Activated T-helper 2 cell treated with anti-CD3 and anti-CD28 coated beads, Interferon-gamma antibody, Interleukin-2, Interleukin-4, amounts not matched to agents 10 μg/mL and 5 μg/mL and 100 μg/mL, durations not matched to agents 14 hours and 24 hours and 36 hours (primary cell): ENCODE measurements at regions of chr1 and their contacts with region 1.

Region 1: GRCh38 chr1:246566128-246566812 is at the starts of genes CNST and TFB2M:
- DNase-seq: peak; percentile 93
- H3K4me3 Mint-ChIP-seq: peak within 1 kb of the TSS; percentile 99
- H3K27ac Mint-ChIP-seq: peak within 1 kb of the TSS; percentile 98
- H3K4me1 Mint-ChIP-seq: peaks cover 35% of the 10 kb centered on the region
- H3K27me3 Mint-ChIP-seq: no peaks in the 10 kb centered on the region
- total RNA-seq, gene CNST: 18.8 and 21.6 TPM in 2 replicates
- total RNA-seq, gene TFB2M: 21.0 and 21.7 TPM in 2 replicates

Region 2: GRCh38 chr1:244970661-244971551 is 1595.4 kb before region 1 on chr1:
- intact Hi-C with region 1: loop called (anchors 2 kb)
- DNase-seq: peak; percentile 88
- H3K4me3 Mint-ChIP-seq: peak overlapping the region; percentile 91
- H3K27ac Mint-ChIP-seq: peak overlapping the region; percentile 98
- H3K4me1 Mint-ChIP-seq: peaks cover 13% of the 10 kb centered on the region
- H3K27me3 Mint-ChIP-seq: peaks cover 4% of the 10 kb centered on the region

Region 3: GRCh38 chr1:245953876-245954660 is 612.2 kb before region 1 on chr1:
- intact Hi-C with region 1: loop called (anchors 5 kb)
- DNase-seq: no peak
- H3K4me3 Mint-ChIP-seq: peak overlapping the region; percentile 73
- H3K27ac Mint-ChIP-seq: peak overlapping the region; percentile 92
- H3K4me1 Mint-ChIP-seq: peaks cover 28% of the 10 kb centered on the region
- H3K27me3 Mint-ChIP-seq: no peaks in the 10 kb centered on the region

Region 4: DNA sequence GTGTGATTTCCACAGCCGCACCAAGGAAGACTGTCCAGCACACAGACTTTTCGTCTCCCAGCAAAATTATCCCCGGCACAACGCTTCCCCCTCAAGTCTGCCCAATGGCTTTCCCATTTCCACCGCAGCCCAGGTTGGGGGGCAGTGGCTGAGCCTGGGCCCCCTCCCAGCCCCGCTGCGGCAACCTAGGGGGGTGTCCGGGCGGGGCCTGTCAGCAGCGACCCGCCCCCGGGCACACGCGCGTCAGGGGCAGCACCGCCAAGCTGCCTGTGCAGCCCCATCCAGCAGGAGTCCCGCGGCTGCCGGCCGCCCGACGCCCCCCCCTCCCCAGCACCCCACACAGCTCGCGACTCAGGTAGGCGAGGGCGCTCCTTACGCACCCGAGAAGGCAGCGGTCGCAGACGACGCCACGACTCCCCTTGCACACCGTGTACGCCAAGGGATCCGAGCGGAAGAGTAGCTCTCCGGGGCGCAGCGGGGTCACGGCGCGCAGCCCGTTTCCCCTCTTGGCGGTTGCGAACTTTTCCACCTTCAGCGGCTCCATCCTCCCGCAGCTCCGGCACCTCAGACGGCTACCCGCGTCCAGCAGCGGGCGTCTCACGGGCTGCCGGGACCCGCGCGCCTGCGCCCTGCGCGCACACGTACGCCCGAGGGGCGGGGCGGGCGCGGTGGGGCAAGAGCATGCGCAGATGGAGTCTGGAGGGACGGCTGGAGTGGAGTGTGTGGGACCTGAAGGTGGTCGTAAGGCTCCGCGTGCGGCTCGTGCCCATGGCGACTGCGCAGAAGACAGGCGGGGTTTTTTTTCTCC is 59.4 kb before region 1 on chr1 and contains the start of gene SMYD3:
- intact Hi-C with region 1: loop called (anchors 1 kb)
- DNase-seq: peak; percentile 67
- H3K4me3 Mint-ChIP-seq: peak within 1 kb of the TSS; percentile 85
- H3K27ac Mint-ChIP-seq: peak within 1 kb of the TSS; percentile 90
- H3K4me1 Mint-ChIP-seq: peaks cover 20% of the 10 kb centered on the region
- H3K27me3 Mint-ChIP-seq: no peaks in the 10 kb centered on the region
- total RNA-seq, gene SMYD3: 24.1 and 26.2 TPM in 2 replicates

Region 5: GRCh38 chr1:246602194-246602593 is 35.9 kb after region 1 on chr1:
- intact Hi-C with region 1: loop called (anchors 5 kb)
- DNase-seq: no peak
- H3K4me3 Mint-ChIP-seq: no peak overlapping the region
- H3K27ac Mint-ChIP-seq: no peak overlapping the region
- H3K4me1 Mint-ChIP-seq: peaks cover 14% of the 10 kb centered on the region
- H3K27me3 Mint-ChIP-seq: no peaks in the 10 kb centered on the region

Region 6: GRCh38 chr1:246699095-246699735 is 132.9 kb after region 1 on chr1:
- intact Hi-C with region 1: loop called (anchors 2 kb)
- DNase-seq: peak; percentile 71
- H3K4me3 Mint-ChIP-seq: no peak overlapping the region
- H3K27ac Mint-ChIP-seq: no peak overlapping the region
- H3K4me1 Mint-ChIP-seq: peaks cover 9% of the 10 kb centered on the region
- H3K27me3 Mint-ChIP-seq: peaks cover 5% of the 10 kb centered on the region

Region 7: GRCh38 chr1:246724016-246724730 is 157.9 kb after region 1 on chr1 and contains the start of gene SCCPDH:
- intact Hi-C with region 1: loop called (anchors 1 kb)
- DNase-seq: peak; percentile 63
- H3K4me3 Mint-ChIP-seq: peak within 1 kb of the TSS; percentile 92
- H3K27ac Mint-ChIP-seq: peak within 1 kb of the TSS; percentile 73
- H3K4me1 Mint-ChIP-seq: peaks cover 9% of the 10 kb centered on the region
- H3K27me3 Mint-ChIP-seq: no peaks in the 10 kb centered on the region
- total RNA-seq, gene SCCPDH: 34.1 and 34.3 TPM in 2 replicates